CD4-positive, alpha-beta T cell (primary cell): ENCODE measurements at regions of chr11 and their contacts with region 1.

Region 1: DNA sequence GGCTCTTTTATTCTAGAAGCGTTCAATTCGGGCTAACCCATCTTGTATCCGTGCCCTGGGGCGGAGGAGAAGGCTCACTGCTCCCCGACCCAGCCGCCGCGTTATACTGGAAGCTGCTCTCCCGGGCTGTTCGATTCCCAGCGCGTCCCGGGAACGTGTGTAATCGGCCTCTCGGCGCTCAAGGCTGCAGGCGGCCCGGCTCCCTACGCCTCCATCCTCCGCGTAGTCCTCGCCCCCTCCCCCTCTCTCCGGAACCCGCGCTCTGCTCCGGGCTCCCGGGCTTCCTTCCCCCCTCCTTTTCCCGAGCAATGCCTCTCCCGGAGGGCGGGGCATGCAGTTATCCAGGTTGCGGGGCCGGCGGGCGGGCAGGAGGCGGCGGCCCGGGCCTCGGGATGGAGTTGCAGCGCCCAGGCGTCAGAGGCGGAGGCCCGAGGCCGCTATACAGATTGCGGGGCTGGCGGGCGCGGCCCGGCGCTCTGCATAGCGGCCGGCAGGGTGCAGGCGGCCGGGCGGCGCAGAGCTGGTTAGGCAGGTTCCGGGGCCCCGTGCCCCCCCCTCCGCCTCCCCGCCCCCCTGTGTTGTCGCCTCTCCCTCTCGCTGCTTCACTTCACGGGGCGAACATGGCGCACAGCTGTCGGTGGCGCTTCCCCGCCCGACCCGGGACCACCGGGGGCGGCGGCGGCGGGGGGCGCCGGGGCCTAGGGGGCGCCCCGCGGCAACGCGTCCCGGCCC is at the start of gene KMT2A:
- DNase-seq: peak; percentile 88 to 97 (median 93)
- ATAC-seq: peak; percentile 54
- H3K4me3 ChIP-seq: peak within 1 kb of the TSS; percentile 94
- H3K4me3 Mint-ChIP-seq: peak within 1 kb of the TSS; percentile 99
- H3K27ac ChIP-seq: peak within 1 kb of the TSS; percentile 91 to 98
- H3K27ac Mint-ChIP-seq: peak within 1 kb of the TSS; percentile 98
- H3K4me1 ChIP-seq: peaks cover 26% of the 10 kb centered on the region
- H3K4me1 Mint-ChIP-seq: peaks cover 50% of the 10 kb centered on the region
- H3K27me3 ChIP-seq: no peaks in the 10 kb centered on the region
- H3K27me3 Mint-ChIP-seq: no peaks in the 10 kb centered on the region
- CTCF ChIP-seq: no peak
- total RNA-seq, gene KMT2A: 135 to 140 TPM

Region 2: DNA sequence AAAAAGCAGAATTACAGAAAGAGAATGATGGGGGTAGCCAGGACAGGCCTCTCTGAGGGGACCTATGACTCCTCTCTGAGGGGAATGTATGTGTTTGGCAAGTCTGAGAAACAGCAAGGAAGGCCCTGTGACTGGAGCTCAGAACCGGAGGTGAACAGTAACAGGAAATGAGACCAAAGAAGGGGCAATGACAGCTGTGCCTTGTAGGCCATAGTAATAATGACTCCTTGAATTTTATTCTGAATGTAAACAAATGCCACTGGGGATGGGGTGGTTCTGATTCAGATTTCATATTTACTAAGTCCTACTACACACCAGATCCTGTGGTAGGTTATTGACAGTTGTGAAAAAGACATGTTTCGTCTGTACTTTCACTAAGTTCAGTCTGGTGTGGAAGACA is 1545.9 kb before region 1 on chr11:
- CTCF ChIA-PET with region 1: no interaction called
- POLR2A ChIA-PET with region 1: no interaction called
- intact Hi-C with region 1: no loop called
- DNase-seq: peak in 5 of 14 experiments; percentile 4 to 47 (median 35)
- ATAC-seq: peak; percentile 78
- H3K4me3 ChIP-seq: no peak overlapping the region
- H3K4me3 Mint-ChIP-seq: peak overlapping the region; percentile 11
- H3K27ac ChIP-seq: no peak overlapping the region
- H3K27ac Mint-ChIP-seq: peak overlapping the region; percentile 78
- H3K4me1 ChIP-seq: peaks cover 11% of the 10 kb centered on the region
- H3K4me1 Mint-ChIP-seq: peaks cover 24% of the 10 kb centered on the region
- H3K27me3 ChIP-seq: no peaks in the 10 kb centered on the region
- H3K27me3 Mint-ChIP-seq: no peaks in the 10 kb centered on the region
- CTCF ChIP-seq: no peak

Region 3: GRCh38 chr11:118295834-118296454 is 140.1 kb before region 1 on chr11:
- CTCF ChIA-PET with region 1: no interaction called
- POLR2A ChIA-PET with region 1: no interaction called
- intact Hi-C with region 1: no loop called
- DNase-seq: peak in 12 of 14 experiments; percentile 23 to 81 (median 45)
- ATAC-seq: peak; percentile 85
- H3K4me3 ChIP-seq: no peak overlapping the region
- H3K4me3 Mint-ChIP-seq: no peak overlapping the region
- H3K27ac ChIP-seq: no peak overlapping the region
- H3K27ac Mint-ChIP-seq: peak overlapping the region; percentile 29
- H3K4me1 ChIP-seq: peaks cover 12% of the 10 kb centered on the region
- H3K4me1 Mint-ChIP-seq: peaks cover 36% of the 10 kb centered on the region
- H3K27me3 ChIP-seq: no peaks in the 10 kb centered on the region
- H3K27me3 Mint-ChIP-seq: no peaks in the 10 kb centered on the region
- CTCF ChIP-seq: peak; percentile 76

Region 4: DNA sequence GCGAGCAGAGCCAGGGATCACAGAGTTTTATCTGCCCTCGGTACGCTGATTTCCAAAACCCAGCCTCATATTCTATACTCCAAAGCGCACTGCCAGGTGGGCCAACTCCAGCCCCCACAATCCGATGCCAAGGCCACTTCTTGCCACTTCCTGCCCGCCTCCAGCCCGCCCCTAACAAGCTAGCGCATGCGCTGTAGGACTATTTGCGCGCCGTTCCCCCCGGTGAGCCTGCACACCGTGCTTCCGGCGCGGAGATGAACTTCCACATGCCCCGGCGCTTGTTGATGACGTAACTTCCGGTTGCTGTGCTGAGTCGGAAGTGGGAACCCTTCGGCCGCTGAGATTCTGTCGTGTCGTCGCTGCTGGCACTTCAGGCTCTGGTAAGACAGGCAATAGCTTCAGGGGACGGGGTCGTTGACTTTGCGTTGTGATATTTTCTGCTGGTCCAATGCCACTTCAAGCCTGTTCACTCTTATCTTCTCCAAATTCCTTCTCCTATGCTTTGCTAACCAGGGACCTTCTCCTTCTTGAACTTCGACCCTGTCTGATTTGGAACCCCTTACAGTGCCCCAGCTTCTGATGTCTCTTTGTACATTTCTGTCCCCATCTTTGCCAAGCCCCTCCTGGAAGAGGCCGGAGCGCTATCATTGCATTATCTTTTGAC is 76.6 kb before region 1 on chr11 and contains the start of gene UBE4A:
- CTCF ChIA-PET with region 1: no interaction called
- POLR2A ChIA-PET with region 1: interaction called, 14 read pairs
- intact Hi-C with region 1: loop called in 1 of 2 experiments (anchors 2 kb)
- DNase-seq: peak; percentile 95 to 99 (median 98)
- ATAC-seq: peak; percentile 84
- H3K4me3 ChIP-seq: peak within 1 kb of the TSS; percentile 74
- H3K4me3 Mint-ChIP-seq: peak within 1 kb of the TSS; percentile 92
- H3K27ac ChIP-seq: peak within 1 kb of the TSS; percentile 89
- H3K27ac Mint-ChIP-seq: peak within 1 kb of the TSS; percentile 99
- H3K4me1 ChIP-seq: peaks cover 31% of the 10 kb centered on the region
- H3K4me1 Mint-ChIP-seq: peaks cover 60% of the 10 kb centered on the region
- H3K27me3 ChIP-seq: no peaks in the 10 kb centered on the region
- H3K27me3 Mint-ChIP-seq: peaks cover 8% of the 10 kb centered on the region
- CTCF ChIP-seq: no peak
- total RNA-seq, gene UBE4A: 40.1 to 43.0 TPM

Region 5: DNA sequence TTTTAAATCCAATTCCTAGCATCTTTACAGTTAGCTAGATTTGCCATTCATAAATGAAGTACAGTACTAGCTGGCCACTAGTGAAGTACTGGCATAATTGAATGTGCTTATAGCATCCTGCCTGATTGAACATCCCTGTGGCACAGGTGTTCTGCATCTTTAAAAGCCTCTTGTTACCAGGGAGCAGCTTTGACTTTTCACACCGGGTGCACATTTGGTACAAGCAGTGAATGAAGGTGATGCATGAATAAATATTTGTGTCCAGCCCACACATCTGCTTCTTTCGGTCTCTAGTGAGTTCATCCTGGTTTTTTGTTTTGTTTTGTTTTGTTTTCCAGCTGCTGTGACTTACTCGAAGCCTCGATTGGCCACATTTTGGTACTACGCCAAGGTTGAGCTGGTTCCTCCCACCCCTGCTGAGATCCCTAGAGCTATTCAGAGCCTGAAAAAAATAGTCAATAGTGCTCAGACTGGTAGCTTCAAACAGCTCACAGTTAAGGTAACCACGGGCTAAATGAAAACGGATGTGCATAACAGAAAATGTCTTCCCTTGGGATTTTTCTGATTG is 29.4 kb before region 1 on chr11:
- CTCF ChIA-PET with region 1: interaction called, 6 read pairs
- POLR2A ChIA-PET with region 1: interaction called, 24 read pairs
- intact Hi-C with region 1: loop called in 1 of 2 experiments (anchors 1 kb)
- DNase-seq: no peak
- ATAC-seq: no peak
- H3K4me3 ChIP-seq: no peak overlapping the region
- H3K4me3 Mint-ChIP-seq: no peak overlapping the region
- H3K27ac ChIP-seq: no peak overlapping the region
- H3K27ac Mint-ChIP-seq: peak overlapping the region; percentile 58
- H3K4me1 ChIP-seq: peaks cover 21% of the 10 kb centered on the region
- H3K4me1 Mint-ChIP-seq: peaks cover 54% of the 10 kb centered on the region
- H3K27me3 ChIP-seq: no peaks in the 10 kb centered on the region
- H3K27me3 Mint-ChIP-seq: no peaks in the 10 kb centered on the region
- CTCF ChIP-seq: no peak

Region 6: GRCh38 chr11:118488480-118489109 is 52.5 kb after region 1 on chr11:
- CTCF ChIA-PET with region 1: interaction called, 7 read pairs
- POLR2A ChIA-PET with region 1: interaction called, 8 read pairs
- intact Hi-C with region 1: loop called (anchors 2 kb)
- DNase-seq: peak; percentile 67 to 91 (median 76)
- ATAC-seq: peak; percentile 88
- H3K4me3 ChIP-seq: no peak overlapping the region
- H3K4me3 Mint-ChIP-seq: no peak overlapping the region
- H3K27ac ChIP-seq: peak overlapping the region in 1 of 2 donors; percentile 37
- H3K27ac Mint-ChIP-seq: peak overlapping the region; percentile 4
- H3K4me1 ChIP-seq: peaks cover 2% of the 10 kb centered on the region
- H3K4me1 Mint-ChIP-seq: peaks cover 5% of the 10 kb centered on the region
- H3K27me3 ChIP-seq: no peaks in the 10 kb centered on the region
- H3K27me3 Mint-ChIP-seq: no peaks in the 10 kb centered on the region
- CTCF ChIP-seq: peak; percentile 89

Region 7: GRCh38 chr11:118659314-118659952 is 223.4 kb after region 1 on chr11:
- CTCF ChIA-PET with region 1: no interaction called
- POLR2A ChIA-PET with region 1: no interaction called
- intact Hi-C with region 1: no loop called
- DNase-seq: peak; percentile 80 to 91 (median 88)
- ATAC-seq: peak; percentile 100
- H3K4me3 ChIP-seq: no peak overlapping the region
- H3K4me3 Mint-ChIP-seq: no peak overlapping the region
- H3K27ac ChIP-seq: no peak overlapping the region
- H3K27ac Mint-ChIP-seq: no peak overlapping the region
- H3K4me1 ChIP-seq: peaks cover 10% of the 10 kb centered on the region
- H3K4me1 Mint-ChIP-seq: no peaks in the 10 kb centered on the region
- H3K27me3 ChIP-seq: no peaks in the 10 kb centered on the region
- H3K27me3 Mint-ChIP-seq: no peaks in the 10 kb centered on the region
- CTCF ChIP-seq: peak; percentile 94